ENCODE measurements at regions of chr21 and their contacts with region 1.

Region 1: DNA sequence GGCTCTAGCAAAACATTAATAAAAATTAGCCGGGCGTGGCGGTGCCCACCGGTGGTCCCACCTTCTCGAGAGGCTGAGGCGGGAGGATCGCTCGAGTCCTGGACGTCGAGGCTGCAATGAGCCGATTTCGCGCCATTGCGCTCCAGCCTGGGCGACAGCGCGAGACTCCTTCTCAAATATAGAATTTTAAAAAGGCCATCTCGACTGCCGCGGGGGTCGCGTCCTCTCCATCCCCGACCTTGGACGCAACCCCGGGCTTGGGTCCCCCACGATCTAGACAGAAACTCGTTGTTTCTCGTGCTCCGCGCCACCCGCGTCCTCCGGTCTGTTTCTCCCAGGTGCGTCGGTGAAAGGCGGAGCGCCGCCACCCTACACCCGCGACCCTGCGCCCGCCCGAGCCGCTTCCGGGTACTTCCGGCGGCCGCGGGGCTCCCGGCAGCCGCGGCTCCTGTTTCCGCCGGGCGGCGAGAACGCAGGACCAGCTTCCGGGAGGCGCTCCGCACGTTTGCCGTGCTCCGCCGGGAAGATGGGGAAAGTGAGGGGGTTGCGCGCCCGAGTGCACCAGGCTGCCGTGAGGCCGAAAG is at the start of gene SLX9:
- DNase-seq: peak; percentile 80
- ATAC-seq: peak; percentile 92
- H3K4me3 Mint-ChIP-seq: peak within 1 kb of the TSS; percentile 88
- H3K27ac Mint-ChIP-seq: peak within 1 kb of the TSS; percentile 84
- H3K4me1 Mint-ChIP-seq: peaks cover 42% of the 10 kb centered on the region
- H3K27me3 Mint-ChIP-seq: no peaks in the 10 kb centered on the region
- CTCF ChIP-seq: no peak
- total RNA-seq, gene SLX9: 26.0 and 34.7 TPM in 2 replicates

Region 2: GRCh38 chr21:44510508-44511210 is 429.0 kb before region 1 on chr21:
- CTCF ChIA-PET with region 1: no interaction called
- POLR2A ChIA-PET with region 1: no interaction called
- intact Hi-C with region 1: loop called (anchors 2 kb)
- DNase-seq: peak; percentile 66
- ATAC-seq: peak; percentile 72
- H3K4me3 Mint-ChIP-seq: no peak overlapping the region
- H3K27ac Mint-ChIP-seq: no peak overlapping the region
- H3K4me1 Mint-ChIP-seq: peaks cover 2% of the 10 kb centered on the region
- H3K27me3 Mint-ChIP-seq: peaks cover 10% of the 10 kb centered on the region
- CTCF ChIP-seq: no peak

Region 3: DNA sequence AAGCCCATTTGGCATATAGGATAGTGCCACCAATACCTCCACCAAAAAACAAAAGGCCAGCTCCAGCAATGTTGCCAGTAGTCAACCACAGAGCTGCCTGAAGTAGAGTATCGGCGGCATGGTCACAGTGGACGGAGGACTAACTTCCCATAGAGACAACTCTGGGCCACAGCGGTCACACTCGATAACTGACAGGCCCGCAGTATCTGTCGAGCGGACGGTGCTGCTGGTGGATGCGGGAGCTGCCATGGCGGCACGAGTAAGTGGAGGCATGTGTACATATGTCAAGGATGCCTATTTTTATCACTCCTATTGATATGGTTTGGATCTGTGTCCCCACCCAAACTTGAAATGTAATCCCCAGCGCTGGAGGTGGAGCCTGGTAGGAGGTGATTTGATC is 261.7 kb before region 1 on chr21:
- CTCF ChIA-PET with region 1: no interaction called
- POLR2A ChIA-PET with region 1: no interaction called
- intact Hi-C with region 1: no loop called
- DNase-seq: no peak
- ATAC-seq: no peak
- H3K4me3 Mint-ChIP-seq: no peak overlapping the region
- H3K27ac Mint-ChIP-seq: no peak overlapping the region
- H3K4me1 Mint-ChIP-seq: no peaks in the 10 kb centered on the region
- H3K27me3 Mint-ChIP-seq: peaks cover 31% of the 10 kb centered on the region
- CTCF ChIP-seq: no peak

Region 4: DNA sequence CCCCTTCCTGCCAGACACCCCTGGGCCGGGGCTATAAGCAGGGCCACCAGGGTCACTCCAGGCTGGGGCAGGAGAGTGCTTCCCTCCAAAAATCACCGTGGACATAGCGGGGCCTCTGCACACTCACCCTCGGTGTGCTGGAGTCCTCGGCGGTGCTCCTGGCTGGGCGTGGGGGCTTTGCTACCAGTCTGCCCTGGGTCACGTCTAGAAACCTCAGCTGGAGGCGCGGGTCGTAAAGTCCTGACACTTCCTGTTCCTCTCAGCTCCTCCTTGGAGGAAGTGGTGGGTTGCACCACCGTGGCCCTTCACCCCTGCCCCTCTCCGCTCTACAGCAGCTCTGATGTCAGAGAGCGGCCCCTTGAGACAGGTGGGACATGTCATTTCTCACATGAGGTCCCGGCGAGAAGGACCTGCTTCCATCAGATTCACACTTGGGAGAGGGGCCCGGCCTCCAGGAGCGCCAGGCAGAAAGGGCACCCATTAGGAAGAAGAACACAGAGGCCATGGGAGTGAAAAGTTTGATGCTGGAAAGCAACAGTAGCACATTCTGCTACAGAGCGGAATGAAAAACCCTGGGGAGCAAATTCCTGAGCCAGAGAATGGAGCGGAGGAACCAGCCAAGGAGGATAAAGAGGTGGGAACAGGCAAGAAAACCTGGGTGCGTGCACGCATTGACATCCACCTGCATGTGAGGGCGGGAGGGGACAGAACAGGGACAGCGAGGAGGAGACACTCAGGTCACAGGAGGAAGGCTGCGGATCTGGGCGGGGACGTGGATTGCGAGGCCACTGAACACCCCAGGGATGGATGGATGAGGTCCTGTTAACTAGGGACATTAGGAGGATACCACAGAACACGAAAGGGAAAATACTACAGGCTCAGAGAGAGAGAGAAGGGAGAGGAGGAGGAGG is 18.7 kb before region 1 on chr21 and contains the start of gene ITGB2:
- CTCF ChIA-PET with region 1: interaction called, 3 read pairs
- POLR2A ChIA-PET with region 1: interaction called, 5 read pairs
- intact Hi-C with region 1: loop called (anchors 2 kb)
- DNase-seq: peak; percentile 69
- ATAC-seq: peak; percentile 91
- H3K4me3 Mint-ChIP-seq: peak within 1 kb of the TSS; percentile 90
- H3K27ac Mint-ChIP-seq: peak within 1 kb of the TSS; percentile 94
- H3K4me1 Mint-ChIP-seq: peaks cover 89% of the 10 kb centered on the region
- H3K27me3 Mint-ChIP-seq: no peaks in the 10 kb centered on the region
- CTCF ChIP-seq: no peak
- total RNA-seq, gene ITGB2: 124 and 131 TPM in 2 replicates

Region 5: DNA sequence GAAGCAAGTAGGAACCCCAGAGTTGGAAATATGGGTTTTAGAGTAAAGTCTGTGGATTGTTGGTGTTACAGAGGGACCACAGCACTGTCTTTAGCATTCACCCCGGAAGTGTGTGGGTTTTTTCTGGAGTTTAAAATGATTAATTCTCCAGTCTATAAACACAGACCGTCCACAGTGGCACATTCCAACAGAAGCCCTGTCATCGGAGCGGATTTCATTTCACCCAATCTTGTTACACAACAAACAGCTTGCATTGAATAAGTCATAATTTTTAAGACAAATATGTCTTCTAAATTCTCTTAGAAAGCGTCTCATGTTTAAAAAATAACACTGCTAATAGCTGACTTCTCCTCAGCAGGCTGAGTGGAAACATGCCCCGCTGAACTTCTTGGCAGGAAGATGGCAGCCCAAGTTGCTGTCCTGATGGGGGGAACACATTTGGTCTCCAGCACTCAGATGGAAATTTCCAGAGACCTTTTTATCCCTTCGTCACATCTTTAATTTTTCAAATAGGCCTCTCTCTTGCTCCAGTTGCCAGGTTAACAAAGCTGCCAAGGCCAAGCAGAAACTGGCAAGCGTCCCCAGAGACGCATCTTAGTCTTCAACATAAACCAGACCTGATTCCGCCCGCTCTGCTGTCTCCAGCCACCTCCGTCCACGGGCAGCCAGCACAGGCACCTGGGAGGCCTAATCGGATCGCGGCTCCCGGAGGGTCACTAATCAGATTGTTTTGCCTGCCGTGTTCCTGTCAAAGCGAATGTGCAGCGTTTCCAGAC is 631.4 kb after region 1 on chr21:
- CTCF ChIA-PET with region 1: no interaction called
- POLR2A ChIA-PET with region 1: no interaction called
- intact Hi-C with region 1: no loop called
- DNase-seq: no peak
- ATAC-seq: no peak
- H3K4me3 Mint-ChIP-seq: no peak overlapping the region
- H3K27ac Mint-ChIP-seq: no peak overlapping the region
- H3K4me1 Mint-ChIP-seq: no peaks in the 10 kb centered on the region
- H3K27me3 Mint-ChIP-seq: peaks cover under 1% of the 10 kb centered on the region
- CTCF ChIP-seq: no peak

Measured in activated B cell treated with CpG ODN at 0.5 μM for 24 hours (primary cell).